ENCODE measurements at regions of chr4 and their contacts with region 1.

Region 1: GRCh38 chr4:114378306-114378903 is 220.2 kb upstream of the UGT8 start:
- DNase-seq: no peak
- ATAC-seq: no peak
- H3K4me3 ChIP-seq: no peak overlapping the region
- H3K27ac ChIP-seq: no peak overlapping the region
- H3K4me1 ChIP-seq: no peaks in the 10 kb centered on the region
- H3K27me3 ChIP-seq: no peaks in the 10 kb centered on the region
- CTCF ChIP-seq: peak; percentile 41
- EP300 ChIP-seq: no peak
- POLR2A ChIP-seq: no peak
- RAD21 ChIP-seq: no peak

Region 2: GRCh38 chr4:113878668-113879067 is 499.7 kb before region 1 on chr4:
- CTCF ChIA-PET with region 1: no interaction called
- POLR2A ChIA-PET with region 1: no interaction called
- in situ Hi-C with region 1: no loop called
- intact Hi-C with region 1: loop called (anchors 5 kb)
- DNase-seq: peak; percentile 18
- ATAC-seq: peak; percentile 92
- H3K4me3 ChIP-seq: no peak overlapping the region
- H3K27ac ChIP-seq: no peak overlapping the region
- H3K4me1 ChIP-seq: no peaks in the 10 kb centered on the region
- H3K27me3 ChIP-seq: no peaks in the 10 kb centered on the region
- CTCF ChIP-seq: peak; percentile 62
- EP300 ChIP-seq: no peak
- POLR2A ChIP-seq: no peak
- RAD21 ChIP-seq: no peak

Region 3: GRCh38 chr4:114040319-114041116 is 337.9 kb before region 1 on chr4:
- CTCF ChIA-PET with region 1: no interaction called
- POLR2A ChIA-PET with region 1: no interaction called
- in situ Hi-C with region 1: no loop called
- intact Hi-C with region 1: no loop called
- DNase-seq: no peak
- ATAC-seq: no peak
- H3K4me3 ChIP-seq: no peak overlapping the region
- H3K27ac ChIP-seq: no peak overlapping the region
- H3K4me1 ChIP-seq: no peaks in the 10 kb centered on the region
- H3K27me3 ChIP-seq: no peaks in the 10 kb centered on the region
- CTCF ChIP-seq: no peak
- EP300 ChIP-seq: no peak
- POLR2A ChIP-seq: no peak
- RAD21 ChIP-seq: no peak

Region 4: DNA sequence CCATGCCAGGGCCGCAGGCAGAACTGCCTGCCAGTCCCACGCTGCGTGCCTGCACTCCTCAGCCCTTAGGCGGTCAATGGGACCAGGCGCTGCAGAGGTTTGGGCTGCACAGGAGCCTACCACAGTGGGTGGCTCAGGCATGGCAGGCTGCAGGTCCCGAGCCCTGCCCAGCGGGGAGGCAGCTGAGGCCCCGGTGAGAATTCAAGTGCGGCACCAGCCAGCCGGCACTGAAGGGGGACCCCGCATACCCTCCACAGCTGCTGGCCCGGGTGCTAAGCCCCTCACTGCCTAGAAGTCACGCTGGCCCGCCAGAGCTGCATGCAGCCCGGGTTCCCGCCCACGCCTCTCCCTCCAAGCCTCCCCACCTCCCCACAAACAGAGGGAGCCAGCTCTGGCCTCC is 82.3 kb before region 1 on chr4:
- CTCF ChIA-PET with region 1: no interaction called
- POLR2A ChIA-PET with region 1: no interaction called
- in situ Hi-C with region 1: no loop called
- intact Hi-C with region 1: no loop called
- DNase-seq: no peak
- ATAC-seq: no peak
- H3K4me3 ChIP-seq: no peak overlapping the region
- H3K27ac ChIP-seq: no peak overlapping the region
- H3K4me1 ChIP-seq: no peaks in the 10 kb centered on the region
- H3K27me3 ChIP-seq: no peaks in the 10 kb centered on the region
- CTCF ChIP-seq: no peak
- EP300 ChIP-seq: no peak
- POLR2A ChIP-seq: no peak
- RAD21 ChIP-seq: no peak

Measured in HepG2 (cell line).